HCT116 (cell line): ENCODE measurements at regions of chr5 and their contacts with region 1.

Region 1: DNA sequence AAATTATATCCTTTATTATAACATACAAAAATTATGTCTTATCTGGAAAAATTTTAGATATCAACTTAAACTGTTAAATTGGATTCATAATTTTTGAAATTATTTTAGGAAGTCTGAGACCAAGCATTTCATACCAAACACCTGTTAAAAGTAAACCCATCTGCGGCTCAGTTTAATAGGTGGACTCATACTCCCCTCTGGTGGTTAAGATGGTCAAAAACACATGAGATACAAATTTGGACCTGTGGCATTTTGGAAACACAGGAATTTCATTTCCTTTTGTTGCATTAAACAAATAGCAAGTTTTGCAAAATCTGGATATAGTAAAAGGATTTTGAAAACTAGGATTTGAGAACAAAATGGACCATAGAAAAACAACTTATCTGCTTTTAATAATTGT is 53.7 kb downstream of the RGMB start:
- DNase-seq: peak; percentile 45
- ATAC-seq: peak; percentile 73
- H3K4me3 ChIP-seq: no peak overlapping the region
- H3K27ac ChIP-seq: no peak overlapping the region
- H3K4me1 ChIP-seq: no peaks in the 10 kb centered on the region
- H3K27me3 ChIP-seq: no peaks in the 10 kb centered on the region
- CTCF ChIP-seq: peak; percentile 28 to 65 (median 58); a peak in 5 of 6 replicates
- POLR2A ChIP-seq: no peak
- RAD21 ChIP-seq: peak; percentile 78

Region 2: DNA sequence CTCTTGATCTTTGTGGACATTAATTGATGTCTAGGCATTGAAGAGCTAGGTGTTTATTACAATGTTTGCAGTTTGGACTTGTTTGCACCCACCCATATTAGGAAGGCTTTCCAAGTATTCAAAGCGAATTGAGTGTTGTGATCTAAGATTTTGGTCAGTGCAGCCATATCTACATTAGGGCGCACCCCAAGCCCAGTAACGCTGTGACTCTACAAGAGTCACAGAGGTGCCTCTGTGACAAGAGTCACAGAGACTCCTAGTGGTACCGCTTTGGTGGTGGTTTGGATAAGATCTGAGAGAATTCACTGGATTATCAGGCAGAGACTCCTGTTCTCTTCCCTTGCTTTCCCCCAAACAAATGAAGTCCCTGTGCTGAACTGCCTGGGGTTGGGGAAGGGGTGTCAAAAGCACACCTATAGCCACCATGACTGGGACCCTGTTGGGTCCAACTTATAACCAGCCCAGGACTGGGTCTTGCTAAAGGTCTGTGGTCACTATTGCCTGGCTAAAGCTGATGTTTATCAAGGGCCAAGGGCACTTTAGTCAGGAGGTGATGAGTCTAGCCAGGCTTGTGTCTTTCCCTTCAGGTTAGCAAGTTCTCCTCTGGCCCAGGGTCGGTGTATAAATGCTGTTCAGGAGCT is 1530.0 kb before region 1 on chr5:
- CTCF ChIA-PET with region 1: no interaction called
- POLR2A ChIA-PET with region 1: no interaction called
- RAD21 ChIA-PET with region 1: no interaction called
- intact Hi-C with region 1: loop called (anchors 1 kb)
- DNase-seq: peak; percentile 60
- ATAC-seq: peak; percentile 100
- H3K4me3 ChIP-seq: no peak overlapping the region
- H3K27ac ChIP-seq: no peak overlapping the region
- H3K4me1 ChIP-seq: no peaks in the 10 kb centered on the region
- H3K27me3 ChIP-seq: no peaks in the 10 kb centered on the region
- CTCF ChIP-seq: peak; percentile 65 to 94 (median 72)
- POLR2A ChIP-seq: no peak
- RAD21 ChIP-seq: peak; percentile 77

Region 3: GRCh38 chr5:97425511-97425910 is 1401.7 kb before region 1 on chr5:
- CTCF ChIA-PET with region 1: no interaction called
- POLR2A ChIA-PET with region 1: no interaction called
- RAD21 ChIA-PET with region 1: no interaction called
- intact Hi-C with region 1: loop called (anchors 10 kb)
- DNase-seq: no peak
- ATAC-seq: no peak
- H3K4me3 ChIP-seq: no peak overlapping the region
- H3K27ac ChIP-seq: no peak overlapping the region
- H3K4me1 ChIP-seq: no peaks in the 10 kb centered on the region
- H3K27me3 ChIP-seq: no peaks in the 10 kb centered on the region
- CTCF ChIP-seq: peak; percentile 6 to 48 (median 39); a peak in 4 of 6 replicates
- POLR2A ChIP-seq: no peak
- RAD21 ChIP-seq: peak; percentile 39

Region 4: GRCh38 chr5:98768160-98769005 is 58.8 kb before region 1 on chr5:
- CTCF ChIA-PET with region 1: no interaction called
- POLR2A ChIA-PET with region 1: no interaction called
- RAD21 ChIA-PET with region 1: interaction called in 1 of 2 experiments, 3 read pairs
- intact Hi-C with region 1: loop called (anchors 2 kb)
- DNase-seq: no peak
- ATAC-seq: peak; percentile 67
- H3K4me3 ChIP-seq: peak overlapping the region; percentile 59 to 63
- H3K27ac ChIP-seq: peak overlapping the region; percentile 12; the same call in 1 of the 2 replicates
- H3K4me1 ChIP-seq: peaks cover 13 to 48% of the 10 kb centered on the region in 2 experiments
- H3K27me3 ChIP-seq: peaks cover 6% of the 10 kb centered on the region; the same call in 1 of the 2 replicates
- CTCF ChIP-seq: peak in 2 of 3 experiments; percentile 85 to 98; a peak in 4 of 6 replicates
- POLR2A ChIP-seq: no peak
- RAD21 ChIP-seq: no peak

Region 5: DNA sequence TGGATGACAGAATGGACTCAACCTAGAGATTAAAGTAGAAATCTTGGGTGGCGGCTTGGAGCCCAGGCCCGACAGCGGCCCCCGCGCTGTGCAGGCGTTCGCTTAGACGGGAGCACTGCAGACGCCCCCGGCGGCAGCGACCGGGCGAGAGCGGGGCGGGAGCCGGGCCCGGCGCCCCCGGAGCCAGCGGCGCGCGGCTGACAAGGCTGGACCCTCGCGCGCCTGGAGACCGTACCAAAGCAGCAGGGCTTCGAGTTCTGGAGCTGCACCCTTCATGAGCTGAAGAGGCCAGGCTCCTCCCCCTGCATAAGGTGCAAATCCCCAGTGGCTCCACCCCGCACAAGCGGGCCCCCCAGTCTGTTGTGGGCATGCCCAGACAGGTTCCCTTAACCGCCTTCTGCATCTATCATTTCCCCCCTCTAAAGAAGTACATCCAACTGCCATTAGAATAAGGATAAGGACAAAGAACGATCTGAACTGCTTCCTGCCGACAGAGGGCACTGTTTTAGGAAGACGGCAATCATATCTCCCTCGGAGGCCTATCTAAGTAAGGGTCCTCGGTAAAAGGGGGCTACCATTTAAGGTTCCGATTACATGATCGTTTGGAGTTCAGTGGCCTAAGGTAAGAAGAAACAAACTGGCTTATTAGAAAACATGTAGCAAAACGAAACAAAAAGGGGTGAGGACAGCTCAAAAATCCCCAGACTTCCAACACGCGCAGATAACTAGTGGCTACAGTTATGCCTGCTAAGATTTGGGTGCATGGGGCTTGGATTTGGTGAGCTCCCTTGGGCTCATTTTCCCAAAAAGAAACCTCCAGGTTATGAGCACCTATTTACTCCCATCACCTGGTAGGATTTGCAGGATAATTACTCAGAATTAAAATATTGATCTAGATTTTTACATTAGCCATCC is 12.6 kb after region 1 on chr5:
- CTCF ChIA-PET with region 1: no interaction called
- POLR2A ChIA-PET with region 1: no interaction called
- RAD21 ChIA-PET with region 1: no interaction called
- intact Hi-C with region 1: no loop called
- DNase-seq: no peak
- ATAC-seq: peak; percentile 57
- H3K4me3 ChIP-seq: no peak overlapping the region
- H3K27ac ChIP-seq: no peak overlapping the region
- H3K4me1 ChIP-seq: no peaks in the 10 kb centered on the region
- H3K27me3 ChIP-seq: no peaks in the 10 kb centered on the region
- CTCF ChIP-seq: no peak
- POLR2A ChIP-seq: no peak
- RAD21 ChIP-seq: no peak